ENCODE measurements at regions of chr6 and their contacts with region 1.

Region 1: DNA sequence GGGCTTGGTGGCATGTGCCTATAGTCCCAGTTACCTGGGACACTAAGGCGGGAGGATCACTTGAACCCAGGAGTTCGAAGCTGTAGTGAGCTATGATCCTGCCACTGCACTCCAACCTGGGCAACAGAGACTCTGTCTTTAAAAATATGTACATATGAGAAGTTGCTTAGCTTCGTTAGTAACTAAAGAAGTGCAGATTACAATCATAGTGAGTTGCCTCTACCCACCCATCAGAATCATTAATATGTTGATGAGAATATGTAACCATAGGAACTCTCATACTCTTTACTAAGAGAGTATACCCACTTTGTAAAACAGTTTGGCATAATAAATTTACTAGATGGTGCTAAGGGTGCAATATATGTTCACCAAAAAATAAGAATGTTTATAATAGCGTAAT is 54.0 kb downstream of the EFHC1 start:
- DNase-seq: no peak
- ATAC-seq: no peak
- H3K4me3 ChIP-seq: no peak overlapping the region
- H3K27ac ChIP-seq: no peak overlapping the region
- H3K4me1 ChIP-seq: no peaks in the 10 kb centered on the region
- H3K27me3 ChIP-seq: no peaks in the 10 kb centered on the region
- CTCF ChIP-seq: no peak
- POLR2A ChIP-seq: no peak

Region 2: DNA sequence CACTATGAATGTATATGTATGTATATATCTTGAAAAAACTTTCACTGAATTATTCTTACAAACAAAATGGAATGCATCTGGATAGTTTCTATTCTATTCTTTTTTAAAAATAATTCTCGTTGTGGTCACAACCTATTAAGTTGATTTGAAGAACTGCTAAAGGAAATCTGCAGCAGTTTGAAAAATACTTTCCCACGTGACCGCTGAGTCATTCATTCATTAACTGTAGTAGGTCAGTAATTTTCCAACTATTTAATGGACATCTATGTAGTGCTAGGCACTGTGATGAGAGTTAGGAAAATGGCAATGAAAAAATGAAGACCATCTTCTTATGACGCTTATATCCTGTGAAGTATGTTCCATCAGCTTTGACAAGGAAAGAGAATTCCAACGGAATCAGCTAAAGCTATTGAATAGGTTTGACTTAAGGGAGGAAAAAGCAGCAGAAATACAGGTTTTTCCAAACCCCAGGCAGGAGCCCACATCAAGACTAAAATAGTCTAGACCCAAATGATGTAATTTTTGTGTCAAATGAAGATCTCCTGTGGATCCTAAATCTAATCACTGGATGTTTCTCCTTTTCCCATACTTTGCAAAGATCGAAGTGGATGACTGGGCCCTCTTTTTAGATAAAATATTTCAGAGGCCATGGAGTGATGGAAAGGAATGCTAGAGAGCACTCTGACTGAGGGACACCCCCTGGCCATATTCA is 58.1 kb before region 1 on chr6:
- intact Hi-C with region 1: no loop called
- DNase-seq: no peak
- ATAC-seq: no peak
- H3K4me3 ChIP-seq: no peak overlapping the region
- H3K27ac ChIP-seq: no peak overlapping the region
- H3K4me1 ChIP-seq: peaks cover 0 to 48% (median 22%) of the 10 kb centered on the region in 12 donors
- H3K27me3 ChIP-seq: no peaks in the 10 kb centered on the region
- CTCF ChIP-seq: no peak
- POLR2A ChIP-seq: no peak

Region 3: GRCh38 chr6:52426680-52427079 is 47.5 kb before region 1 on chr6:
- intact Hi-C with region 1: loop called in 1 of 10 experiments (anchors 5 kb)
- DNase-seq: no peak
- ATAC-seq: no peak
- H3K4me3 ChIP-seq: no peak overlapping the region
- H3K27ac ChIP-seq: no peak overlapping the region
- H3K4me1 ChIP-seq: peaks cover 0 to 14% (median 0%) of the 10 kb centered on the region in 12 donors
- H3K27me3 ChIP-seq: no peaks in the 10 kb centered on the region
- CTCF ChIP-seq: no peak
- POLR2A ChIP-seq: no peak

Region 4: DNA sequence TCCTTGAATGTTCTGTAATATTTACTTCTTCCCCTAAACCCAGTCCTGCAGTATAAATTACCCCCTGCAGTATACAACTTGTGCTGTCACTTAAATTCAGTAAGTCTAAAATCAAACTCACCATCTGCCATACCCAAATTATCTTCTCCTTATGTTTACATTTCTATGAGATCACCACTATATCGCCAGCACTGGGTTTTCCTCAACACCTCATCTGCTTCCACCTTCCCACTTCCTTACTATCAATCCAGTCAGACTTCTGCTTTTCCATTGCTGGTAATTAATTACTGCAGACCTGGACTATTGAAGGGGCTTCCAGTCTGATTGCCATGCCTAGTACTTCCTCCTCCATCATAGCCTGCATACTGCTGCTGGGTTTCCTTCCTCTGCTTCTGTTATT is 38.8 kb before region 1 on chr6:
- intact Hi-C with region 1: loop called in 2 of 10 experiments (anchors 5 kb)
- DNase-seq: no peak
- ATAC-seq: no peak
- H3K4me3 ChIP-seq: no peak overlapping the region
- H3K27ac ChIP-seq: no peak overlapping the region
- H3K4me1 ChIP-seq: no peaks in the 10 kb centered on the region
- H3K27me3 ChIP-seq: no peaks in the 10 kb centered on the region
- CTCF ChIP-seq: no peak
- POLR2A ChIP-seq: no peak